ENCODE measurements at regions of chr18 and their contacts with region 1.

Region 1: DNA sequence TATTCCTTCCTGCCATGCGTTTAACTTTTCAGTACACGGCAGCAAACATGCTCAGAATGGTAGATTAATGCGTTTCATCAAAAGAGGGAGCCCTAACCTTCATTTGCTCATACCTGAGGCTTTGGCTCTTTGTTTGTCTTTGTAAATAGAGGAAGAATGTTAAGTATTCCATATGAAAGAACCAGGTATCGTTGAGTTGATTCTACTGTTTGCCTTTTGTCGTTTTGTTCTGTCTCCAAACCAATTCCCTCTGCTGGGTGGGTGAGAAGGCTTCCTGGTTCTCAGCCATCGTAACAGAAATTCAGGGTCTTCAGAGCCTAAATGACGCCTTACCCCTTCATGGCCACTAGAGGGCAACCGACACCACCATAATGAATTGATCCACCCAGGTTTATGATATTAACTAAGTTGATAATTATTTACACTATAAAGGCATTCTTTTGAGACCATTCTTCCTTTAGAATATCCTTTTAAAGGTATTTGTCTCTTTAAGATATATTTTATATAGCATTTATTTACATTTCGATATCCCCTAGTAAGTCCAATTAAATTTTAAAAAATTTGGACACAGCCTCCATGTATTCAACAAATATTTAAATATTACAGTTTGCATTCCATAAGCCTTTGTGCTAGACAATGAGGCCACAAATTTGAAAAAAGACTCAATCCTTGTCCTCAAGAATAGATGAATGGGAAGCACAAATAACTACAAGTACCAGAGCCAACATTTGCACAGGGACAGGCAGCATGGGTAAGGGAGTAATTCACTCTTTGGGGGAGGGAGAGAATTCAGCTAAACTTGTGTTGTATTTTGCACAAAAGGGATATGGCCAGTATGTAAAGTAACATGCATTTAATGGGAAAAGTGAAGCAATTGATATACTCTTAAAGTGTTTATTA is 48.1 kb downstream of the TIMM21 start:
- DNase-seq: peak; percentile 75
- H3K4me3 ChIP-seq: peak overlapping the region; percentile 28
- H3K27ac ChIP-seq: no peak overlapping the region
- H3K4me1 ChIP-seq: no peaks in the 10 kb centered on the region
- H3K27me3 ChIP-seq: no peaks in the 10 kb centered on the region
- CTCF ChIP-seq: peak; percentile 89

Region 2: GRCh38 chr18:74342416-74343043 is 146.1 kb after region 1 on chr18:
- CTCF ChIA-PET with region 1: interaction called, 6 read pairs
- POLR2A ChIA-PET with region 1: no interaction called
- intact Hi-C with region 1: loop called (anchors 1 kb)
- DNase-seq: peak; percentile 52
- H3K4me3 ChIP-seq: no peak overlapping the region
- H3K27ac ChIP-seq: no peak overlapping the region
- H3K4me1 ChIP-seq: no peaks in the 10 kb centered on the region
- H3K27me3 ChIP-seq: no peaks in the 10 kb centered on the region
- CTCF ChIP-seq: peak; percentile 71

Region 3: GRCh38 chr18:74495581-74496507 is 299.4 kb after region 1 on chr18 and contains the start of gene CNDP2:
- CTCF ChIA-PET with region 1: no interaction called
- POLR2A ChIA-PET with region 1: no interaction called
- intact Hi-C with region 1: loop called (anchors 10 kb)
- DNase-seq: peak; percentile 98
- H3K4me3 ChIP-seq: peak within 1 kb of the TSS; percentile 94
- H3K27ac ChIP-seq: peak within 1 kb of the TSS; percentile 88
- H3K4me1 ChIP-seq: peaks cover 8% of the 10 kb centered on the region
- H3K27me3 ChIP-seq: no peaks in the 10 kb centered on the region
- CTCF ChIP-seq: no peak
- total RNA-seq, gene CNDP2: 75.3 and 89.4 TPM in 2 replicates

Region 4: DNA sequence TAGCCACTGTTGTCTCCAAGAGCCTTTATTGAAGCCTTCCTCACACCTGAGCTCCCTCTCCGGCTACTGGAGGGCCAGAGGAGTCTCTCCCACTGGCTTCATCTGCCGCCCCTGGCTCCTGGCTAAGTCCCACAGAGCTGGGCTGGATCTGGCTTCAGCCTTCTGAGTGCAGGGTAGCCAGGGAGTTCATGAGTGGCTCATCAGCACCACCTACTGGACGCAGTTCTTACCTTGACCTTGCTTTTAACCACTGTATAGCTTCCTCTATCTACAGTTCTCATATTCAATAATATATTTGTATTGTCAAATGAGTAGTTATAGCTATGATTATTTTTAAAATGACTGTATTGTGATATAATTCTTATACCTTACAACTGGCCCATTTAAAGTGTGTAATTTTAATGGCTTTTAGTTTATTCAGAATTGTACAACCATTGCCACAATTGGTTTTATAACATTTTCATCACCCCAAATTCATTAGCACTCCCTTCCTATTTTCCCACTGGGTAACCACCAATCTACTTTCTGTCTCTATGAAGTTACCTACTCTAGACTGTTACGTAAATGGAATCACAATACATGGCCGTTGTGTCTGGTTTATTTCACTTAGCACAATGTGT is 355.6 kb after region 1 on chr18:
- CTCF ChIA-PET with region 1: interaction called, 5 read pairs
- POLR2A ChIA-PET with region 1: no interaction called
- intact Hi-C with region 1: loop called (anchors 1 kb)
- DNase-seq: peak; percentile 82
- H3K4me3 ChIP-seq: no peak overlapping the region
- H3K27ac ChIP-seq: no peak overlapping the region
- H3K4me1 ChIP-seq: no peaks in the 10 kb centered on the region
- H3K27me3 ChIP-seq: peaks cover 21% of the 10 kb centered on the region
- CTCF ChIP-seq: peak; percentile 83